ENCODE measurements at regions of chr4 and their contacts with region 1.

Region 1: GRCh38 chr4:138035781-138036258 is 206.3 kb downstream of the SLC7A11 start:
- DNase-seq: peak; percentile 5
- ATAC-seq: peak; percentile 47
- H3K4me3 Mint-ChIP-seq: no peak overlapping the region
- H3K27ac Mint-ChIP-seq: no peak overlapping the region
- H3K4me1 Mint-ChIP-seq: no peaks in the 10 kb centered on the region
- H3K27me3 Mint-ChIP-seq: no peaks in the 10 kb centered on the region

Region 2: GRCh38 chr4:137408527-137409177 is 627.2 kb before region 1 on chr4:
- CTCF ChIA-PET with region 1: no interaction called
- POLR2A ChIA-PET with region 1: no interaction called
- intact Hi-C with region 1: no loop called
- DNase-seq: no peak
- ATAC-seq: no peak
- H3K4me3 Mint-ChIP-seq: no peak overlapping the region
- H3K27ac Mint-ChIP-seq: no peak overlapping the region
- H3K4me1 Mint-ChIP-seq: no peaks in the 10 kb centered on the region
- H3K27me3 Mint-ChIP-seq: no peaks in the 10 kb centered on the region

Region 3: DNA sequence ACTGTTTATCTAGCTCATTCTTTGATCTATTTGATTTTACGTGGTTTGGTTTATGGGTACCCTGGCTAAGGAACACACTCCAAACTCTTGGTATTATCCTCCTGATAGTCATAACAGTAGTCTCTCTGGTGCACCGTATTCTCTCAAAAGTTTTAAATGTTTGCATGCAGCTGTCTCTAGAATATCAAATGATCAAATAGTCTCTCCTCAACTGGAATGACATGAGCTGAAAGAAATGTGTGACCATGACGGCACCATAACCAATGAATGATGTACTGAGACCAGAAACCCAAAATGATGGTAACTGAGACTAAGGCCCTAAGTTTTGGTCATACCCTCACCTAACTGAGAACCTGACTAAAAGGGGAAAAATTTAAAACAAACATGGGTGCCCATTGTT is 113.1 kb before region 1 on chr4:
- CTCF ChIA-PET with region 1: no interaction called
- POLR2A ChIA-PET with region 1: no interaction called
- intact Hi-C with region 1: no loop called
- DNase-seq: no peak
- ATAC-seq: no peak
- H3K4me3 Mint-ChIP-seq: no peak overlapping the region
- H3K27ac Mint-ChIP-seq: no peak overlapping the region
- H3K4me1 Mint-ChIP-seq: no peaks in the 10 kb centered on the region
- H3K27me3 Mint-ChIP-seq: no peaks in the 10 kb centered on the region

Region 4: GRCh38 chr4:138182838-138183426 is 147.1 kb after region 1 on chr4:
- CTCF ChIA-PET with region 1: no interaction called
- POLR2A ChIA-PET with region 1: no interaction called
- intact Hi-C with region 1: loop called in 1 of 2 experiments (anchors 5 kb)
- DNase-seq: no peak
- ATAC-seq: no peak
- H3K4me3 Mint-ChIP-seq: no peak overlapping the region
- H3K27ac Mint-ChIP-seq: no peak overlapping the region
- H3K4me1 Mint-ChIP-seq: no peaks in the 10 kb centered on the region
- H3K27me3 Mint-ChIP-seq: peaks cover 2% of the 10 kb centered on the region

Measured in activated CD4-positive, alpha-beta T cell treated with anti-CD3 and anti-CD28 coated beads for 36 hours (primary cell).